ENCODE measurements at regions of chr15 and their contacts with region 1.

Region 1: GRCh38 chr15:43776718-43777583 is at the start of gene ELL3:
- DNase-seq: peak; percentile 57 to 77
- H3K4me3 ChIP-seq: peak within 1 kb of the TSS; percentile 86
- H3K27ac ChIP-seq: peak within 1 kb of the TSS; percentile 45; the same call in 1 of the 2 replicates
- H3K4me1 ChIP-seq: no peaks in the 10 kb centered on the region
- H3K27me3 ChIP-seq: no peaks in the 10 kb centered on the region
- CTCF ChIP-seq: peak; percentile 77
- total RNA-seq, gene ELL3: 6.1 and 7.0 TPM in 2 replicates

Region 2: GRCh38 chr15:43800286-43801141 is 23.6 kb after region 1 on chr15 and contains the start of gene HYPK:
- CTCF ChIA-PET with region 1: interaction called, 9 read pairs
- POLR2A ChIA-PET with region 1: interaction called, 6 read pairs
- intact Hi-C with region 1: loop called (anchors 2 kb)
- DNase-seq: peak; percentile 59 to 79
- H3K4me3 ChIP-seq: peak within 1 kb of the TSS; percentile 80
- H3K27ac ChIP-seq: peak within 1 kb of the TSS; percentile 51
- H3K4me1 ChIP-seq: peaks cover 14% of the 10 kb centered on the region
- H3K27me3 ChIP-seq: no peaks in the 10 kb centered on the region
- CTCF ChIP-seq: no peak
- total RNA-seq, gene HYPK: 10.1 and 14.4 TPM in 2 replicates

Region 3: DNA sequence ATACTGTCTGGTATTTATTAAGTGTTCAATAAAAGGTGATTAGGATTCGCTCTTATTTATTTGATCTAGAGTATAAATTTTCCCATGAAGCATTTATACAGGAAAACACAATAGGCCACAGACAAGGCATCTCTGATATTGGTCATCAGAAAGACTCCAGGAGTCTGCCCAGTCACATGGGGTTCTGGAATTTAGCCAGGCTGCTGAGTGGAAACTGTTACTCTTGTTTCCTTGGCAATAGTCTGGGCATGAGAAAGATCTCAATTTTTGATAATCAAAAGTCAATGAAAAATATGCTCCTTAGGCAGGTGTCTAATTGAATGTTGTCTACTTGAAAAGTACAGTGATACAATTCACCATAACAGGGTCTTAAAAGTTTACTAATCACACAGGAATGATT is 256.9 kb after region 1 on chr15:
- CTCF ChIA-PET with region 1: no interaction called
- POLR2A ChIA-PET with region 1: no interaction called
- intact Hi-C with region 1: no loop called
- DNase-seq: peak in 1 of 2 experiments; percentile 22
- H3K4me3 ChIP-seq: no peak overlapping the region
- H3K27ac ChIP-seq: no peak overlapping the region
- H3K4me1 ChIP-seq: peaks cover 5% of the 10 kb centered on the region; the same call in 1 of the 2 replicates
- H3K27me3 ChIP-seq: no peaks in the 10 kb centered on the region
- CTCF ChIP-seq: no peak